ENCODE measurements at regions of chr22 and their contacts with region 1.

Region 1: DNA sequence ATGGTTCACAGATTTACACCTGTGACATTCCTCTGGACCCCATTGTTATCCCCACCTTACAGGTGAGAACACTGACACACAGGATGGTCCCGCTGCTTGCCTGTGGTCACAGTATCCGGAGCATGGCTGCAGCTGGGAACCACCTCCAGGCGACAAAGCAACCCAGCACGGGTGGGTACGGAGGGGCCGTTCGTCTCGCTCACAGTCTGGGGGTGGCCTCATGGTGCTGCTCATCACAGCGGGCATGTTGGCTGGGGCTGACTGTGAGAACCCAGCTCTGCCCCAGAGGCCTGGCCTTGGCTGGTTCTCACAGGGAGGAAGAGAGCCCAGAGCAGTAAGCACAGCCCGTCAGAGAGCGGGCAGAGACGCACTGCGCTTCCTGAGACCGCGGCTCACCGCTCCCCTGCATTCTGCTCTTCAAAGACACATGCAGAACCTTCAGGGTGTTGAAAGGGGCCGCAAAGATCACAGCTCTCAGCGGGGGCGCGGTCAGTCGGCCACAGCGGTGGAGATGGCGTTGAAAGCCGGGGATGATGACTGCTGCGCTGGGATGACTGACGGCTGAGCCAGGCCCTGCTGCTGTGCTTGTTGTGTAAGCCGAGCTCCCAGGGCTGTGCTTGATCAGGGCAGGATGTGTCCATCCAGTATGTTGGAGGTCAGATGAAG is 423.0 kb downstream of the BRD1 start:
- DNase-seq: no peak
- ATAC-seq: no peak
- H3K4me3 ChIP-seq: no peak overlapping the region
- H3K4me3 Mint-ChIP-seq: no peak overlapping the region
- H3K27ac ChIP-seq: no peak overlapping the region
- H3K27ac Mint-ChIP-seq: no peak overlapping the region
- H3K4me1 ChIP-seq: no peaks in the 10 kb centered on the region
- H3K4me1 Mint-ChIP-seq: no peaks in the 10 kb centered on the region
- H3K27me3 ChIP-seq: no peaks in the 10 kb centered on the region
- H3K27me3 Mint-ChIP-seq: peaks cover 16 to 21% of the 10 kb centered on the region in 2 donors
- CTCF ChIP-seq: no peak

Region 2: DNA sequence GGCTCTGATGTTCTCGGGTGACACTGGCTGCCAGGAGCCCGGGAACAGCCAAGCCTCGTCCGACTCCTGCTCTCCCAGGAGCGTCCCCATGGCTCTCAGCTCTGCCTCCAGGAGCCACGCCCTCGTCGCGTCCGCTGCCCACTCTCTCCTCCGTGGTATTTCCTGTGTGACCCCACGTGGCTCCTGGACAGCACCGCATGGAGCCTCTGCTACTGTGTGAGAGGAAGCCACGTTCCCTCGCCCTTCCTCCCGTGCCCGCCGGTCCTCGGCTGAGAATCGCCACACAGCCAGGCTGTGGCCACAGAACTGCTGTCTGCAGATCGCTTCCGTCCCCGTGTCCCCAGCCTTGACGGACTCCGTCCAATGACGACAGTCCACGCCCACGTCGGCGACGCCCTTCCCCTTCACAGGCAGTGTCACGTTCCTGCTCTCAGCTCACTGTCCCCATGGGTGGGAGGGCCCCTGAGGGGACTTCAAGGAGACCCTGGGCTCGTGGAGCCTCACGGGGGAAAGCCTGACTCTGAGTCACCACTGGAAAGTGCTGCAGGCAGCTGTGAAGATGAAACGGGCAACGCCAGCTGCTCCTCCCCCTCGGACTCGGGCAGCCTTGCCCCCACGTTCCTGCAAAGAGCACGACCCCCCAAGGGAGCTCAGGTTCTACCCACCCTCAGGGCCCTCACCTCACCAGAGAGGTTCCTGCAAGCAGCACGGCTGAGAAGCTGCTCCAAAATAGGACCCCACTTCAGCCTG is 35.6 kb before region 1 on chr22:
- intact Hi-C with region 1: loop called (anchors 5 kb)
- DNase-seq: no peak
- ATAC-seq: peak in 1 of 3 donors; percentile 52
- H3K4me3 ChIP-seq: no peak overlapping the region
- H3K4me3 Mint-ChIP-seq: peak overlapping the region; percentile 47
- H3K27ac ChIP-seq: no peak overlapping the region
- H3K27ac Mint-ChIP-seq: peak overlapping the region in 1 of 2 donors; percentile 47
- H3K4me1 ChIP-seq: peaks cover 13% of the 10 kb centered on the region
- H3K4me1 Mint-ChIP-seq: peaks cover 4 to 10% of the 10 kb centered on the region in 2 donors
- H3K27me3 ChIP-seq: no peaks in the 10 kb centered on the region
- H3K27me3 Mint-ChIP-seq: peaks cover 6 to 14% of the 10 kb centered on the region in 2 donors
- CTCF ChIP-seq: no peak